Uterus (tissue), 4 donors: ENCODE measurements at regions of chr11 and their contacts with region 1.

Region 1: GRCh38 chr11:66408488-66409214 is 12.2 kb upstream of the NPAS4 start:
- DNase-seq: peak; percentile 94 to 95
- H3K4me3 ChIP-seq: peak overlapping the region; percentile 22 to 43
- H3K27ac ChIP-seq: peak overlapping the region; percentile 84 to 85
- H3K4me1 ChIP-seq: peaks cover 0 to 6% of the 10 kb centered on the region in 2 donors
- H3K27me3 ChIP-seq: no peaks in the 10 kb centered on the region
- CTCF ChIP-seq: peak; percentile 98 to 100 (median 100)
- POLR2A ChIP-seq: peak; percentile 54 to 63

Region 2: GRCh38 chr11:66291706-66292549 is 116.7 kb before region 1 on chr11 and contains the start of gene TMEM151A:
- intact Hi-C with region 1: no loop called
- DNase-seq: no peak
- H3K4me3 ChIP-seq: no peak within 1 kb of the TSS
- H3K27ac ChIP-seq: no peak within 1 kb of the TSS
- H3K4me1 ChIP-seq: peaks cover 0 to 19% of the 10 kb centered on the region in 2 donors
- H3K27me3 ChIP-seq: peaks cover 7 to 13% of the 10 kb centered on the region in 2 donors
- CTCF ChIP-seq: no peak
- POLR2A ChIP-seq: no peak
- total RNA-seq, gene TMEM151A: 0.27 TPM in 1 of 4 donors, not detected in the others

Region 3: DNA sequence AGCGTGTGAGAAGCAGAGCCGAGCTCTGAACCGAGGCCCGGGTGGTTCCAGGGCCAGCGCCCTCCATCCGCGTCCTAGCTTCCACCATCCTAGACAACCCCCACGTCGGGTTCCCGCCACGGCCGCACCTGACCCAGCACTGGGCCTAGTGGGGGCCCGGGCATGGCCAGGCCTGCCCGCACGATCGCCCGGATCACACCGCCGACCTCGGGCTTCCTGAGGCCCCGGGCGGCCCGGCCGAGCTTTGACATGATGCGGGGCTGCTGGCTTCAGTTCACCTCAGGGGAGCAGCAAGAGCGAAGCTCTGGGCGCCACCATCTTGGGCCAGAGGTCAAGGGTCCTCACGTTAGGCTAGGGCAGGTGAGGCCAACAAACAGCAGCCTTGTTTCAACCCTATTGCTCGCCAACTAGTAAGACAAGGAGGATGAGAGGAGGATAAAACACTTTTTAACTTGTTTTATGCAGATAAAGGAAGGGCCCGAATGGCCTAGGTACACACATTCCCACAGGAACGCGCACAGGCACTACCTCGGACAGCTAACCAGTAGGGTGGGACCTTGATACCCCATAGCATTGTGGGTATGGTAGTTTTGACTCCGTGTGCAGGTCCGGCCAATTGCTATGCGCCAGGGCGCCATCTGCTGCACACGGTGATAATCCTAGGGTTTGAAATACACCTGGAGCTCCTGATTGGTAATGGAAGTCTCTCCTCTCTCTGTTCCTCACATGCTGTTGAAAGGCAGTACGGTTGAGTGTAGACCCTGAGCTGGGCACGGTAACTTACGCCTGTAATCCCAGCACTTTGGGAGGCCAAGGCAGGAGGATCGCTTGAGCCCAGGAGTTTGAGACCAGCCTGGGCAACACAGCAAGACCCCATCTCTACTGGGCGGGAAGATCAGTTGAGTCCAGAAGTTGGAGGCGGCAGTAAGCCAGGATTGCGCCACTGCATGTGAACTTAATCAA is 30.1 kb after region 1 on chr11 and contains the start of gene MRPL11:
- intact Hi-C with region 1: loop called (anchors 5 kb)
- DNase-seq: peak; percentile 87 to 89
- H3K4me3 ChIP-seq: peak within 1 kb of the TSS; percentile 70 to 77
- H3K27ac ChIP-seq: peak within 1 kb of the TSS; percentile 79 to 87
- H3K4me1 ChIP-seq: no peaks in the 10 kb centered on the region
- H3K27me3 ChIP-seq: no peaks in the 10 kb centered on the region
- CTCF ChIP-seq: peak; percentile 66 to 80 (median 74)
- POLR2A ChIP-seq: peak in 1 of 2 donors; percentile 32
- total RNA-seq, gene MRPL11: 28.7 to 57.9 (median 33.4) TPM

Region 4: GRCh38 chr11:67167086-67167485 is 758.4 kb after region 1 on chr11:
- intact Hi-C with region 1: no loop called
- DNase-seq: no peak
- H3K4me3 ChIP-seq: no peak overlapping the region
- H3K27ac ChIP-seq: no peak overlapping the region
- H3K4me1 ChIP-seq: no peaks in the 10 kb centered on the region
- H3K27me3 ChIP-seq: no peaks in the 10 kb centered on the region
- CTCF ChIP-seq: no peak
- POLR2A ChIP-seq: no peak

Region 5: GRCh38 chr11:68370211-68371111 is 1961.8 kb after region 1 on chr11:
- intact Hi-C with region 1: no loop called
- DNase-seq: no peak
- H3K4me3 ChIP-seq: no peak overlapping the region
- H3K27ac ChIP-seq: peak overlapping the region; percentile 57 to 71
- H3K4me1 ChIP-seq: peaks cover 0 to 45% of the 10 kb centered on the region in 2 donors
- H3K27me3 ChIP-seq: no peaks in the 10 kb centered on the region
- CTCF ChIP-seq: no peak
- POLR2A ChIP-seq: no peak